Uterus (tissue), 4 donors: ENCODE measurements at regions of chr4 and their contacts with region 1.

Region 1: GRCh38 chr4:170040031-170040680 is 14.0 kb upstream of the MFAP3L start:
- DNase-seq: no peak
- H3K4me3 ChIP-seq: no peak overlapping the region
- H3K27ac ChIP-seq: no peak overlapping the region
- H3K4me1 ChIP-seq: no peaks in the 10 kb centered on the region
- H3K27me3 ChIP-seq: no peaks in the 10 kb centered on the region
- CTCF ChIP-seq: no peak
- POLR2A ChIP-seq: no peak

Region 2: GRCh38 chr4:169810325-169811323 is 229.5 kb before region 1 on chr4:
- intact Hi-C with region 1: loop called (anchors 5 kb)
- DNase-seq: peak in 1 of 2 donors; percentile 28
- H3K4me3 ChIP-seq: no peak overlapping the region
- H3K27ac ChIP-seq: no peak overlapping the region
- H3K4me1 ChIP-seq: no peaks in the 10 kb centered on the region
- H3K27me3 ChIP-seq: no peaks in the 10 kb centered on the region
- CTCF ChIP-seq: peak; percentile 75 to 78 (median 76)
- POLR2A ChIP-seq: no peak